Thyroid gland (tissue), 4 donors: ENCODE measurements at regions of chr12 and their contacts with region 1.

Region 1: DNA sequence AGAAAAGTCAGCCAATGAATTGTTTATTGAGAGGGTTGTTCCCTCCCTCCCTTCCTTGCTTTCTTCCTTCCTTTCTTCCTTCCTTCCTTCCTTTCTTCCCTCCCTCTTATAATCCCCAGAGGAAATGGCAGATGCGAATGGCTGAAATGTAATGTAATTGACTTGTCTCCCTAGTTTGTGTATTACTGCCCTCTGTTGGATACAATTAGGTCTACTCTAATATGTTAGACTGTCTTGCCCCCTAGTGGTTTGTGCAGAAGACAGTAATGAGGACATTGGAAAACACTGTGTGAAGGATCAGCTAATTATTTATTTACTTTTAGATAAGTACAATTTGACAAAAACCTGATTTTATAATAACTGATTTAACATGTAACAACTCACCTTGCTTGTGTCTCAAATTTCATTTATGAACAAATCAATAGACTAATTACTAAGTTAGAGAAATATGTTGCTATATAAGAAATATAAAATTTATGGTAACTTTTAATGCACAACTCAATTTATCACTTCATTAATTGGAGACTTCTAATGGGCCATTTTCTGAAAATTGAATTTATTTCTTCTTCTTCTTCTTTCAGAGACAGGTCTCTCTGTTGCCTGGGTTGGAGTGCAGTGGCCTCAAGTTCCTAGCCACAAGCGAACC is 229.8 kb upstream of the LRIG3 start:
- DNase-seq: no peak
- H3K4me3 ChIP-seq: no peak overlapping the region
- H3K27ac ChIP-seq: no peak overlapping the region
- H3K4me1 ChIP-seq: no peaks in the 10 kb centered on the region
- H3K27me3 ChIP-seq: no peaks in the 10 kb centered on the region
- CTCF ChIP-seq: peak; percentile 73 to 100 (median 94)
- POLR2A ChIP-seq: no peak

Region 2: DNA sequence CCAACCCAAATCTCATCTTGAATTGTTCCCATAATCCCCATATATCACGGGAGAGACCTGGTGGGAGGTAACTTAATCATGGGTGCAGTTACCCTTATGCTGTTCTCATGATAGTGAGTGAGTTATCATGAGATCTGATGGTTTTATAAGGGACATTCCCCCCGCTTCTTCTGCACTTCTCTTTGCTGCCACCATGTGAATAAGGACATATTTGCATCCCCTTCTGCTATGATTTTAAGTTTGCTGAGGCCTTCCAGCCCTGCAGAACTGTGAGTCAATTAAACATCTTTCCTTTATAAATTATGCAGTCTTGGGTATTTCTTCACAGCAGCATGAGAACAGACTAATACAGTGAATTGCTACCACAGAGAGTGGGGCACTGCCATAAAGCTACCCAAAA is 408.9 kb before region 1 on chr12:
- intact Hi-C with region 1: no loop called
- DNase-seq: no peak
- H3K4me3 ChIP-seq: no peak overlapping the region
- H3K27ac ChIP-seq: no peak overlapping the region
- H3K4me1 ChIP-seq: no peaks in the 10 kb centered on the region
- H3K27me3 ChIP-seq: no peaks in the 10 kb centered on the region
- CTCF ChIP-seq: no peak
- POLR2A ChIP-seq: no peak

Region 3: GRCh38 chr12:59113831-59114615 is 36.1 kb before region 1 on chr12:
- intact Hi-C with region 1: loop called (anchors 5 kb)
- DNase-seq: peak; percentile 70 to 83
- H3K4me3 ChIP-seq: no peak overlapping the region
- H3K27ac ChIP-seq: no peak overlapping the region
- H3K4me1 ChIP-seq: peaks cover 4 to 11% of the 10 kb centered on the region in 2 donors
- H3K27me3 ChIP-seq: no peaks in the 10 kb centered on the region
- CTCF ChIP-seq: peak; percentile 67 to 93 (median 82)
- POLR2A ChIP-seq: no peak

Region 4: GRCh38 chr12:59230334-59230733 is 80.2 kb after region 1 on chr12:
- intact Hi-C with region 1: no loop called
- DNase-seq: no peak
- H3K4me3 ChIP-seq: no peak overlapping the region
- H3K27ac ChIP-seq: no peak overlapping the region
- H3K4me1 ChIP-seq: no peaks in the 10 kb centered on the region
- H3K27me3 ChIP-seq: no peaks in the 10 kb centered on the region
- CTCF ChIP-seq: no peak
- POLR2A ChIP-seq: no peak